Lower leg skin (tissue), 4 donors: ENCODE measurements at regions of chr3 and their contacts with region 1.

Region 1: DNA sequence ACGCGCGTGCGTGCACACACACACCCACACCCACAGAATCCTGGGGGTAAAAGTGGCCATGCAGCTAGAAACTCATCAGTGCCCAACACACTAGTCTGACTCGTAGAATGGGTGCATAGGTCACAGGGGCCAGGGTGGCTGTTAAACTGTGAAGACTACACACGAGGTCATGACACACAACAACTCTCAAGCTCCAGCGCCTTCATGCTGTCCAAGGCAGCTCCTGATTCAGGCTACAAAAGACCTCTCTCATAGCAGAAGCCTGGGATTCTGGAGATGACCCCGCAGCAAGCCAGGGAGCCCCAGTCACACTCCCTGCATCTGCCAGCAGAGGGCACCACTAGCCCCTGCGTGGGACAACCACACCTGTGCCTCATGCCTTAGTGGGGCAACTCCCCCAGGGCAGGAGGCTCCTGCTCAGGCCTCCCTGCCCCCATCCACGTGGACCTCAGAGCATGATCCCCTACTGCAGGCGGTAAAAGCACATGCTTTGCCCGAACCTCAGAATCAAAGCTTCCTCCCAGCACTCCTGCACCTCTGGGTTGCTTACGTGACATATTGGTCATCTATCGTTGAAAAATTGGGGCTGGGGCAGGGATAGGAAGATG is 93.1 kb downstream of the LRIG1 start:
- DNase-seq: peak in 1 of 2 donors; percentile 94
- H3K4me3 ChIP-seq: no peak overlapping the region
- CTCF ChIP-seq: peak in 1 of 3 donors; percentile 66
- POLR2A ChIP-seq: no peak

Region 2: GRCh38 chr3:64945171-64945729 is 1462.5 kb before region 1 on chr3:
- intact Hi-C with region 1: no loop called
- DNase-seq: no peak
- H3K4me3 ChIP-seq: no peak overlapping the region
- CTCF ChIP-seq: no peak
- POLR2A ChIP-seq: no peak

Region 3: GRCh38 chr3:66418475-66418931 is 10.8 kb after region 1 on chr3:
- intact Hi-C with region 1: no loop called
- DNase-seq: no peak
- H3K4me3 ChIP-seq: no peak overlapping the region
- CTCF ChIP-seq: no peak
- POLR2A ChIP-seq: no peak

Region 4: GRCh38 chr3:66812136-66812535 is 404.4 kb after region 1 on chr3:
- intact Hi-C with region 1: loop called (anchors 5 kb)
- DNase-seq: no peak
- H3K4me3 ChIP-seq: no peak overlapping the region
- CTCF ChIP-seq: no peak
- POLR2A ChIP-seq: no peak